Activated T-helper 1 cell treated with anti-CD3 and anti-CD28 coated beads, Interleukin-12 subunit alpha, Interleukin-12 subunit beta, Interleukin-2, Interleukin-4 antibody, amounts not matched to agents 30 ng/mL and 10 ng/mL and 1 ng/mL, durations not matched to agents 14 hours and 24 hours and 36 hours (primary cell): ENCODE measurements at regions of chrX and their contacts with region 1.

Region 1: DNA sequence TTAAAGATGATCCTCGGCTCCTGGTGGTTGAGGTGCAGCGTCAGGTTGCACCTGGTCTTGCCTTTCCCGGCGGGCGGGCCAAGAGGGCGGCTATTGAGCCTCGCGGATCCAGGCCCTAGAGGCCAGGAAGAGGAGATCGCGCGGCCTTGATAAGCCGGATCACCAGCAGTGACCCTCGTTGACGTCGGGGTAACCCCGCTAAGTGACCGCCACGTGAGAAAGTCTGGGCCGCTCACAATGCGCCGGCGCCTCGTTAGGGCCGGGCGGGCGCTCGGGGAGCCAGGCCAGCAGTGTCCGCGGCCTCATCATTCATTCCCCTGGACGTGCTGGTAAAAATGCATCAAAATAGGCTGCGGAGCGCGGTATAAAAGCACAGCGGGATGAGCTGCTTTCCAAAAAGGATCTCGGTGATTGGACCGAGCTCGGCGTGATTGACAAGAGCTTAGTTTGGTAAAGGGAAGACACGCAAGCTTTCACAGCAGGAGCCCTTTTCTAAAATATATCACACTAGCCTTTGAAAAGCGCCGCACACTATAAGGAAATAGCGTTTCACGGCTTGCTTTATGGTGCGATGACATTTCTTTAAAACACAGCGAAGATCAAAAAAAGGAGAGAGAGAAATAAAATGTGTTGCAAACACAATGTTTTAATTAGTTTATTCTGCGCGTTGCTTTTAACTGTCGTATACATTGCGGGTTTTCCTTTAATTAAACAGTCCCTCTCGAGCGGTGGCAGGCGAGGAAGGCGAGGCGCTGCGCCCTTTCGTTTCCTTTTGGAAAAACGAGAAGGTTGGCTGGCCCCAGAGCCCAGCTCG is 15.9 kb upstream of the ZIC3 start:
- DNase-seq: no peak
- H3K4me3 Mint-ChIP-seq: no peak overlapping the region
- H3K27ac Mint-ChIP-seq: no peak overlapping the region
- H3K4me1 Mint-ChIP-seq: no peaks in the 10 kb centered on the region
- H3K27me3 Mint-ChIP-seq: peaks cover 23% of the 10 kb centered on the region

Region 2: GRCh38 chrX:137565921-137566745 is 16.1 kb after region 1 on chrX and contains the start of gene ZIC3:
- intact Hi-C with region 1: loop called (anchors 1 kb)
- DNase-seq: no peak
- H3K4me3 Mint-ChIP-seq: no peak within 1 kb of the TSS
- H3K27ac Mint-ChIP-seq: peak within 1 kb of the TSS; percentile 75
- H3K4me1 Mint-ChIP-seq: no peaks in the 10 kb centered on the region
- H3K27me3 Mint-ChIP-seq: peaks cover 39% of the 10 kb centered on the region
- total RNA-seq, gene ZIC3: not detected in 2 replicates